ENCODE measurements at regions of chr15 and their contacts with region 1.

Region 1: GRCh38 chr15:63497642-63498467 is 6.5 kb upstream of the USP3 start:
- DNase-seq: peak; percentile 76
- H3K4me3 Mint-ChIP-seq: no peak overlapping the region
- H3K27ac Mint-ChIP-seq: no peak overlapping the region
- H3K4me1 Mint-ChIP-seq: peaks cover 81% of the 10 kb centered on the region
- H3K27me3 Mint-ChIP-seq: no peaks in the 10 kb centered on the region

Region 2: GRCh38 chr15:63481105-63481810 is 16.6 kb before region 1 on chr15:
- CTCF ChIA-PET with region 1: interaction called, 19 read pairs
- POLR2A ChIA-PET with region 1: no interaction called
- DNase-seq: no peak
- H3K4me3 Mint-ChIP-seq: no peak overlapping the region
- H3K27ac Mint-ChIP-seq: peak overlapping the region; percentile 95
- H3K4me1 Mint-ChIP-seq: peaks cover 78% of the 10 kb centered on the region
- H3K27me3 Mint-ChIP-seq: no peaks in the 10 kb centered on the region

Region 3: DNA sequence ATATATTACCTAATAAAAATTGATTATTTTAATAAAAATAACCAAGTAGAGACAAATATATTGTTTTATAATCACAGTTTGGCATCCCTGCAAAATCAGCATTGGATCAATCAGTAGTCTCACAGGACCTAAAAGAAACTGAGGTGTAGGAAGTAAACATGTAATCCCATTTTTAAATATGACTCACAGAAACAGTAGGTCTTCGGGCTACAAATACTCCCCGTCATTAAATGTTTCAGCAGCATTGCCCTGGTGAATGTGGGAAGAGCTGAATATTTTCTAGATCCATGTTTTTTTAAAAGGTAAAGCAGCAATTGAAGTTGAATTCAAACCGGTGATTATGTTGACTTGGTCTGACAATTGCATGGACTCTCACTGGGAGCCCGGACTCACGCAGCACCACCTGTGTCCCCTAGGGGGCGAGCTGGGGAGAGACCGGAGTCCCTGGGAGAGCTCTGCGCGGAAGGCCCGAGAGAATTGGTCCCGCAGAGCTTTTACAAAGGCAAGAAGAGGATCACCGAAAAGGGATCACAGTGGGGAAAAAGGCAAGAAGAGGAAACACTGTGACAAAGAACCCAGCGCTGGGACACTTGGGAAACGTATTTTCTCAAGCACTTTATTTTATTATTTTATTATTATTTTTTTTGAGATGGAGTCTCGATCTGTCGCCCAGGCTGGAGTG is 10.6 kb before region 1 on chr15:
- CTCF ChIA-PET with region 1: interaction called, 31 read pairs
- POLR2A ChIA-PET with region 1: no interaction called
- DNase-seq: peak; percentile 91
- H3K4me3 Mint-ChIP-seq: no peak overlapping the region
- H3K27ac Mint-ChIP-seq: peak overlapping the region; percentile 7
- H3K4me1 Mint-ChIP-seq: peaks cover 65% of the 10 kb centered on the region
- H3K27me3 Mint-ChIP-seq: no peaks in the 10 kb centered on the region

Region 4: GRCh38 chr15:63519548-63520178 is 21.8 kb after region 1 on chr15:
- CTCF ChIA-PET with region 1: no interaction called
- POLR2A ChIA-PET with region 1: no interaction called
- DNase-seq: no peak
- H3K4me3 Mint-ChIP-seq: no peak overlapping the region
- H3K27ac Mint-ChIP-seq: no peak overlapping the region
- H3K4me1 Mint-ChIP-seq: peaks cover 59% of the 10 kb centered on the region
- H3K27me3 Mint-ChIP-seq: no peaks in the 10 kb centered on the region

Measured in activated CD4-positive, alpha-beta T cell treated with anti-CD3 and anti-CD28 coated beads, Interleukin-2, amount 10 ng/mL, durations not matched to agents 7 days and 5 days (primary cell).